Gastrocnemius medialis (tissue), 4 donors: ENCODE measurements at regions of chr17 and their contacts with region 1.

Region 1: GRCh38 chr17:6677158-6677831 is 25.7 kb downstream of the C17orf100 start:
- DNase-seq: no peak
- ATAC-seq: no peak
- H3K4me3 ChIP-seq: no peak overlapping the region
- H3K27ac ChIP-seq: no peak overlapping the region
- H3K4me1 ChIP-seq: no peaks in the 10 kb centered on the region
- H3K27me3 ChIP-seq: peaks cover 0 to 4% (median 0%) of the 10 kb centered on the region in 3 donors
- CTCF ChIP-seq: no peak
- POLR2A ChIP-seq: no peak

Region 2: DNA sequence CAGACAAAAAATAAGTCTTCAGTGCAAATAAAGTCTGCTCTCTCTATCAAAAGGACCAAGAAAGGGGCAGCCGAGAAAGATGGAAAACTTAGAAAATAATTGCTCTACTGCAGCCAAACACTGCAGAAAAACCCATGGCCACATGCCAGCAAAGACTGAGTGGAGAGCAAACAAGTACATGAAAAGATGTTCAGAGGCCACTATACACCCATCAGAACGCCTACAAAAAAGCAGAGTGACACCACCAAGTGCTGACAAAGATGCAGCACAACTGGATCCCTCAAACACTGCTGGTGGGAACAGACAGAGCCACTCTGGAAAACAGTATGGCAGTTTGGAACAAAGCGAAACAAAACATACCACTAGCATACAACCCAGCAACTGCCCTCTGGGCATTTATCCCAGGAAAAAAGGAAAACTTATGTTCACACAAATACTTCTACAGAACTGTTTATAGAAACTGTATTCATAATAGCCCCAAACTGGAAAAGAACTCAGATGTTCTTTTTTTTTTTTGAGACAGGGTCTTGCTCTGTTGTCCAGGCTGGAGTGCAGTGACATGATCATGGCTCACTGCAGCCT is 73.5 kb before region 1 on chr17:
- in situ Hi-C with region 1: no loop called
- intact Hi-C with region 1: no loop called
- DNase-seq: no peak
- ATAC-seq: no peak
- H3K4me3 ChIP-seq: no peak overlapping the region
- H3K27ac ChIP-seq: no peak overlapping the region
- H3K4me1 ChIP-seq: peaks cover under 1 to 4% of the 10 kb centered on the region in 2 donors
- H3K27me3 ChIP-seq: no peaks in the 10 kb centered on the region
- CTCF ChIP-seq: no peak
- POLR2A ChIP-seq: no peak

Region 3: DNA sequence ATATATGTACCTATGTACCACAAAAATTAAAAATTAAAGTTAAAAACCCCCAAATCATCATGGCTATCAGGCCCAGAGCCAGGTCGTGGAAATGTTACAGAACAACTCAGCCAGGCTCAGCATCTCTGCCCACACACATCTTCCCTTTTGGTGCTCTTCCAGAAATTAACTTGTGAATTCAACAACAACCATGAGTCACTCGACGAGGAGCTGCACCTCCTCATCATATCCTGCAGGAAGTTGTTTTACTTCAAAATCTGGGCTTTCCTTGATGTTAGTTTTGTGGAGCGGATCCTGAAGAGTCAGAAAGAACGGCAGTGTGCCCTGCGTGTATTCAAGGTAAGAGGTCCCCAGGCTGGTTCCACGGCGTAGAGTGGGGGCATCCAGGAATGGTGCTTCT is 109.3 kb after region 1 on chr17:
- in situ Hi-C with region 1: loop called in 1 of 4 experiments (anchors 25 kb)
- intact Hi-C with region 1: no loop called
- DNase-seq: no peak
- ATAC-seq: no peak
- H3K4me3 ChIP-seq: no peak overlapping the region
- H3K27ac ChIP-seq: no peak overlapping the region
- H3K4me1 ChIP-seq: no peaks in the 10 kb centered on the region
- H3K27me3 ChIP-seq: peaks cover 5 to 8% (median 6%) of the 10 kb centered on the region in 3 donors
- CTCF ChIP-seq: no peak
- POLR2A ChIP-seq: no peak

Region 4: GRCh38 chr17:6831661-6832263 is 154.5 kb after region 1 on chr17 and contains the start of gene TEKT1:
- in situ Hi-C with region 1: loop called in 2 of 4 experiments (anchors 25 kb)
- intact Hi-C with region 1: no loop called
- DNase-seq: peak; percentile 25 to 32
- ATAC-seq: no peak
- H3K4me3 ChIP-seq: peak within 1 kb of the TSS in 3 of 4 donors; percentile 6 to 37 (median 23)
- H3K27ac ChIP-seq: no peak within 1 kb of the TSS
- H3K4me1 ChIP-seq: no peaks in the 10 kb centered on the region
- H3K27me3 ChIP-seq: peaks cover 27 to 51% (median 49%) of the 10 kb centered on the region in 3 donors
- CTCF ChIP-seq: no peak
- POLR2A ChIP-seq: no peak
- total RNA-seq, gene TEKT1: not detected